ENCODE measurements at regions of chr21 and their contacts with region 1.

Region 1: DNA sequence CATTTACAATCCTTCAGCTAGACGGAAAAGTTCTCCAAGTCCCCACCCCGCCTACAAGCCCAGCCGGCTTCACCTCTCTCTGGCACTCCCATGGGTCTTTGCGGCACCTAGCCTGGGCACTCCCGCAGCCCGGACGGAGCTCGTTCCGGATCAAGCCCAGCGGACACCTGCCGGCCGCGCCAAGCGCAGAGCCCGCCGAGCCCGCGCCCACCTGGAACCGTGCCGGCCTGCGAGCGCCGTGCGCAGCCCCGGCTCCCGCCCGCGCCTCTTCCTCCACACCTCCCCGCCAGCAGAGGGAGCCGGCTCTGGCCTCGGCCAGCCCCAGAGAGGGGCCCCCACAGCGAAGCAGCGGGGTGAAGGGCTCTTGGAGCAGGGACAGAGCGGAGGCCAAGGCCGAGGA is 50.0 kb upstream of the KRTAP19-8 start:
- DNase-seq: no peak
- H3K4me3 ChIP-seq: no peak overlapping the region
- CTCF ChIP-seq: no peak

Region 2: GRCh38 chr21:30044445-30045064 is 1043.8 kb before region 1 on chr21:
- CTCF ChIA-PET with region 1: interaction called, 66 read pairs
- POLR2A ChIA-PET with region 1: no interaction called
- DNase-seq: no peak
- H3K4me3 ChIP-seq: no peak overlapping the region
- CTCF ChIP-seq: peak; percentile 54

Measured in AG04449 (cell line).